B cell (primary cell): ENCODE measurements at regions of chr2 and their contacts with region 1.

Region 1: GRCh38 chr2:37324786-37325624 is at the start of gene PRKD3:
- DNase-seq: peak; percentile 89
- ATAC-seq: peak; percentile 81
- H3K4me3 ChIP-seq: peak within 1 kb of the TSS; percentile 82 to 91 (median 86)
- H3K4me3 Mint-ChIP-seq: peak within 1 kb of the TSS; percentile 100
- H3K27ac ChIP-seq: peak within 1 kb of the TSS; percentile 80 to 88
- H3K27ac Mint-ChIP-seq: peak within 1 kb of the TSS; percentile 97
- H3K4me1 ChIP-seq: peaks cover 29 to 37% of the 10 kb centered on the region in 2 donors
- H3K4me1 Mint-ChIP-seq: peaks cover 38% of the 10 kb centered on the region
- H3K27me3 ChIP-seq: no peaks in the 10 kb centered on the region
- H3K27me3 Mint-ChIP-seq: peaks cover 3% of the 10 kb centered on the region
- CTCF ChIP-seq: no peak
- total RNA-seq, gene PRKD3: 82.2 and 83.4 TPM in 2 replicates

Region 2: GRCh38 chr2:37231241-37232130 is 93.5 kb before region 1 on chr2 and contains the starts of genes CEBPZ and NDUFAF7:
- CTCF ChIA-PET with region 1: no interaction called
- POLR2A ChIA-PET with region 1: no interaction called
- intact Hi-C with region 1: loop called (anchors 2 kb)
- DNase-seq: peak; percentile 90
- ATAC-seq: peak; percentile 92
- H3K4me3 ChIP-seq: peak within 1 kb of the TSS; percentile 76 to 95 (median 91)
- H3K4me3 Mint-ChIP-seq: no peak within 1 kb of the TSS
- H3K27ac ChIP-seq: peak within 1 kb of the TSS; percentile 85 to 90
- H3K27ac Mint-ChIP-seq: no peak within 1 kb of the TSS
- H3K4me1 ChIP-seq: peaks cover 26 to 28% of the 10 kb centered on the region in 2 donors
- H3K4me1 Mint-ChIP-seq: peaks cover 18% of the 10 kb centered on the region
- H3K27me3 ChIP-seq: no peaks in the 10 kb centered on the region
- H3K27me3 Mint-ChIP-seq: no peaks in the 10 kb centered on the region
- CTCF ChIP-seq: no peak
- total RNA-seq, gene CEBPZ: 43.9 and 56.5 TPM in 2 replicates
- total RNA-seq, gene NDUFAF7: 35.4 and 42.0 TPM in 2 replicates

Region 3: GRCh38 chr2:37295469-37296073 is 29.4 kb before region 1 on chr2:
- CTCF ChIA-PET with region 1: no interaction called
- POLR2A ChIA-PET with region 1: no interaction called
- intact Hi-C with region 1: no loop called
- DNase-seq: peak; percentile 20
- ATAC-seq: no peak
- H3K4me3 ChIP-seq: no peak overlapping the region
- H3K4me3 Mint-ChIP-seq: no peak overlapping the region
- H3K27ac ChIP-seq: peak overlapping the region; percentile 11 to 28
- H3K27ac Mint-ChIP-seq: peak overlapping the region; percentile 12
- H3K4me1 ChIP-seq: peaks cover 6 to 10% of the 10 kb centered on the region in 2 donors
- H3K4me1 Mint-ChIP-seq: peaks cover 45% of the 10 kb centered on the region
- H3K27me3 ChIP-seq: no peaks in the 10 kb centered on the region
- H3K27me3 Mint-ChIP-seq: no peaks in the 10 kb centered on the region
- CTCF ChIP-seq: no peak

Region 4: GRCh38 chr2:37306024-37306423 is 19.0 kb before region 1 on chr2:
- CTCF ChIA-PET with region 1: no interaction called
- POLR2A ChIA-PET with region 1: interaction called, 10 read pairs
- intact Hi-C with region 1: loop called (anchors 2 kb)
- DNase-seq: no peak
- ATAC-seq: no peak
- H3K4me3 ChIP-seq: no peak overlapping the region
- H3K4me3 Mint-ChIP-seq: no peak overlapping the region
- H3K27ac ChIP-seq: peak overlapping the region in 1 of 2 donors; percentile 7
- H3K27ac Mint-ChIP-seq: no peak overlapping the region
- H3K4me1 ChIP-seq: peaks cover 0 to 14% of the 10 kb centered on the region in 2 donors
- H3K4me1 Mint-ChIP-seq: peaks cover 51% of the 10 kb centered on the region
- H3K27me3 ChIP-seq: no peaks in the 10 kb centered on the region
- H3K27me3 Mint-ChIP-seq: no peaks in the 10 kb centered on the region
- CTCF ChIP-seq: no peak

Region 5: DNA sequence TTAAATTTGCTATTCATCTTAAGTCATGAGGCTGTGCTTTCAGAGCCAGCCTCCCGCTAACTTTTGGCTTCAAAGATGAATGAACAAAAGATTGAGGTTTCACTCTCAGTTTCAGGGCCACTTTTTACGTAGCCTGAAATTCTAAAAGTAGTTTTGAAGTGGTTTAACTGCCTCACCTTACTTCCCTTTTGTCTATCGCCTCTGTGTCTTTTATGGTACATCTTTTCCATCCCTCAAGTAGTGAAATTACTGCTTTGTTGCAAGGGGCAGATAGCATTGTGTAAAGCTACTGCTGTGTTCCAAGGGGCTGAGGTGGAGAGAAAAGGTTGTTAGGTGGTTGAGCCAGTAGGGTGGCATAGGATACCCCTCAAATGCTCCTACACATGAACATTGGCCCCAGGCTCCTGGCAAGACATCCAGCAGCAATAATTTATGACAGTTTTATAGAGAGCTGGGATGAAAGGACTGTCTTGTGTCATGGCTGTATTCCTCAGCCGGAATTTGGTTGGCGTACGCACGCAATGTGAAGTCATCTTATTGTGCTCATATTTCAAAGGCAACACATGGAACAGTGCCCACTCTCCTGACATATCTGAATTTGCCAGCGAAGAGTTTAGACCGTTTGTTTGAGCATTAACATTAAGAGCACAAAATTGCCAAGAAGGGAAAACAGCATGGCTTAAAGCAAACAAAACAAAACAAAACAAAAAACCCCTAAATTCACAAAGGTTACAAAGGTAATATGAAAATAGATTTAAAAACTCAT is 51.6 kb after region 1 on chr2:
- CTCF ChIA-PET with region 1: interaction called, 3 read pairs
- POLR2A ChIA-PET with region 1: interaction called, 6 read pairs
- intact Hi-C with region 1: loop called (anchors 1 kb)
- DNase-seq: peak; percentile 81
- ATAC-seq: peak; percentile 74
- H3K4me3 ChIP-seq: peak overlapping the region in 4 of 5 experiments; percentile 5 to 36 (median 30)
- H3K4me3 Mint-ChIP-seq: peak overlapping the region; percentile 83
- H3K27ac ChIP-seq: peak overlapping the region; percentile 72 to 74
- H3K27ac Mint-ChIP-seq: peak overlapping the region; percentile 90
- H3K4me1 ChIP-seq: peaks cover 42 to 45% of the 10 kb centered on the region in 2 donors
- H3K4me1 Mint-ChIP-seq: peaks cover 43% of the 10 kb centered on the region
- H3K27me3 ChIP-seq: no peaks in the 10 kb centered on the region
- H3K27me3 Mint-ChIP-seq: no peaks in the 10 kb centered on the region
- CTCF ChIP-seq: no peak